ENCODE measurements at regions of chr10 and their contacts with region 1.

Region 1: GRCh38 chr10:123967396-123968243 is 76.0 kb upstream of the CPXM2 start:
- DNase-seq: peak; percentile 90
- CTCF ChIP-seq: peak; percentile 90

Region 2: GRCh38 chr10:123117644-123118417 is 849.8 kb before region 1 on chr10:
- in situ Hi-C with region 1: loop called (anchors 25 kb)
- DNase-seq: no peak
- CTCF ChIP-seq: no peak

Region 3: DNA sequence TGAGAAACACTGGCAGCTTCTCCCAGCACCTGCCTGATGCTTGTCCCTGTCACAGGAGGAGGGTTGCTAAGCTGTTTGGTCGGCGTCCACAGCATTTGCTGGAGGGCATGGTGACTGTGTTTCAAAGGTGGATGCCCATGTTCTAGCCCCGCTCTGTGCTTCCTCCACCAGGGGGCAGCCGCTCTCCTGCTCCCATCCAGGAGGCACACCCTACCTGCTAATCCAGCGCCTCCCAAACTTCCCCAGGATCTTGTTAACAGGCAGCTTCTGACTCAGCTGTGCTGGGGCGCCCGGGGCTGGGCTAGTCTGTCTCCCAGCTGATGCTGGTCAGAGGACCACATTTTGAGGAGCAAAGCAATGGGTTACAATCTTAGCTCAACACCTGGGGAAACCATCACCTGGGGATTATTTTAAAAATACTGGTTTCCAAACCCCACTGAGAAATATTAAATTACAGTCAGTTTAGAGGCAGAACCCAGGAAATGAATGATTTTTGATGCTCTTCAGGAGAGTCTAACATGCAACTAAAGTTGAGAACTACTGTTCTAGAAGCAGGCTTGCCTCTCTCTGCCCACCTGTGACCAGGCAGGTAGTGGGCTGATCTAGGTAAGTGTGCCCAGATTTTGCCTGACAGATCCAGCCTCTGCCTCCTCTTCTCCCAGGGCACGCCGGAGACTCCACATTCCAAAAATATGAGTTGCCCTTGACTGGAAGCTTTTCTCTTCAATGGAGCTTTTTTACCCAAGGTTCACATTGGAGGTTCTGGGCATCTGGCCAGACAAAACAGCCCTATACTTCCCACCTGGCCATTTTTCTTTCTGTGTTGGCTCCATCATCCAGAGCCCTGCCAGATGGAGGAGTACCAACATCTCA is 394.1 kb before region 1 on chr10:
- in situ Hi-C with region 1: loop called (anchors 10 kb)
- DNase-seq: peak; percentile 71
- CTCF ChIP-seq: peak; percentile 86